MCF 10A (cell line): ENCODE measurements at regions of chr5 and their contacts with region 1.

Region 1: DNA sequence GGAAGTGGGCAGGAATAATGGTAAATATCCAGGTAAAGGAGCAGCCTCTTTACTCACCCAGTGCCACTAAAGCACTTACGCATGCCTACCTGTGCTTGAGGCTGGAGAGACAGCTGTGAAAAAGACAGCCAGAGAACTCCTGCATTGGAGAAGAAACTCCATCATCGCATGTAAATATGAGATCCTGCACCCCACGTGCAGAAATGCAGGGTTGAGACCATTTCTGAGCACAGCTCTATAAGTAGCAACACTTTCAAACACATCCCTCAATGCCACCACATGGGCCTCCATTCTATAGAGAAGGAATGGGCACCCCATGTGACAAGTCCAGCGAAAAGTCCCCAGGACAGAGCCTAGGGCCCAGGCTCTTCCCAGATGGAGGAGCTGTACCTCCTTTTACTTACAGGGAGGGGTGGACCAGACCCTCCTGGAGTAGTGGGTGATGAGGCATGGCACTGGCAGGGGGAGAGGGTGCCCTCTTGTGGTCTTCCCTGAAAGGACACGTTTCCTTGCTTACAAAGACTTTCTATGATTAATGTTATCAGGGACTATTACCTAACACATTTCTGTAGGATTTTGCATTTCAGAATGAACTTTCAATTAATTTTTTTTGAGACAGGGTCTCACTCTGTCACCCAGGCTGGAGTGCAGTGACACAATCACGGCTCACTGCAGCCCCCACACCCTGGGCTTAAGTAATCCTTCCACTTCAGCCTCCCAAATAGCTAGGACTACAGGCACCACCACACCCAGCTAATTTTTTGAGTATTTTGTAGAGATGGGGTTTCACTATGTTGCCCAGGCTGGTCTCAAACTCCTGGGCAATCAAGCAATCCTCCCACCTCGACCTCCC is 55.3 kb upstream of the IL17B start:
- DNase-seq: peak; percentile 75
- H3K4me3 Mint-ChIP-seq: no peak overlapping the region
- H3K27ac Mint-ChIP-seq: no peak overlapping the region
- H3K4me1 Mint-ChIP-seq: peaks cover 13% of the 10 kb centered on the region
- H3K27me3 Mint-ChIP-seq: no peaks in the 10 kb centered on the region
- CTCF ChIP-seq: peak; percentile 98

Region 2: DNA sequence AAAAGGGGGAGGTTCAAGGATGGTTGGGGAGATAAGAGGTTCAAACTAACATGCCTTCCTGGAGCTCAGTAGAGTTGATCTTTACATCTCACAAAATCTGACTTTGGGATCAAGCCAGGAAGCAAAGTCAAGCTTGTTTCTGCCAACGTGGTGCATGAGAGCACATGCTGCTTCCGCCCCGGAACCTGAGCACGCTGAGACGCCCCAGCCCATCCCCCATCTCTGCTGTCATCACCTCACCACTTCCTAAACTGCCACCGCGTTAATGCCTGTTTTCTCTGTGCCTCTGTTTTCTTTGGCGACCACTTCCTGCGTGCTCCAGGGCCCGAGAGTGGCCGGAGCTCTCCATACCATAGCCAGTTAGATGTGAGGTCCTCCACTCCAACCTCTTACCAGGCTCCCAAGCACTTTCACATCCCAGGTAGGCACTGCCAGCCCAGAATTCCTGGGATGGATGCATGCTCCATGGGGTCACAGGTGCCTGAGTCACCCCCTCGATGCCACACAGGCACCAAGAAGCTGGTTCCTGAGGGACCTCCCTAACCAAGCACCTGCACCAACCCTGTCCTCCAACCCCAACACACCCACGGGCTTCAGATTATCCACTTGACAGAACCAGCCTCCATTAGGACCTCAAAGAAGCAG is 193.9 kb before region 1 on chr5:
- CTCF ChIA-PET with region 1: no interaction called
- POLR2A ChIA-PET with region 1: no interaction called
- intact Hi-C with region 1: no loop called
- DNase-seq: no peak
- H3K4me3 Mint-ChIP-seq: no peak overlapping the region
- H3K27ac Mint-ChIP-seq: no peak overlapping the region
- H3K4me1 Mint-ChIP-seq: peaks cover 7% of the 10 kb centered on the region
- H3K27me3 Mint-ChIP-seq: no peaks in the 10 kb centered on the region
- CTCF ChIP-seq: no peak

Region 3: GRCh38 chr5:149381987-149382340 is 52.4 kb before region 1 on chr5:
- CTCF ChIA-PET with region 1: interaction called, 662 read pairs
- POLR2A ChIA-PET with region 1: interaction called, 5 read pairs
- intact Hi-C with region 1: loop called (anchors 1 kb)
- DNase-seq: peak; percentile 78
- H3K4me3 Mint-ChIP-seq: no peak overlapping the region
- H3K27ac Mint-ChIP-seq: no peak overlapping the region
- H3K4me1 Mint-ChIP-seq: no peaks in the 10 kb centered on the region
- H3K27me3 Mint-ChIP-seq: no peaks in the 10 kb centered on the region
- CTCF ChIP-seq: peak; percentile 97

Region 4: DNA sequence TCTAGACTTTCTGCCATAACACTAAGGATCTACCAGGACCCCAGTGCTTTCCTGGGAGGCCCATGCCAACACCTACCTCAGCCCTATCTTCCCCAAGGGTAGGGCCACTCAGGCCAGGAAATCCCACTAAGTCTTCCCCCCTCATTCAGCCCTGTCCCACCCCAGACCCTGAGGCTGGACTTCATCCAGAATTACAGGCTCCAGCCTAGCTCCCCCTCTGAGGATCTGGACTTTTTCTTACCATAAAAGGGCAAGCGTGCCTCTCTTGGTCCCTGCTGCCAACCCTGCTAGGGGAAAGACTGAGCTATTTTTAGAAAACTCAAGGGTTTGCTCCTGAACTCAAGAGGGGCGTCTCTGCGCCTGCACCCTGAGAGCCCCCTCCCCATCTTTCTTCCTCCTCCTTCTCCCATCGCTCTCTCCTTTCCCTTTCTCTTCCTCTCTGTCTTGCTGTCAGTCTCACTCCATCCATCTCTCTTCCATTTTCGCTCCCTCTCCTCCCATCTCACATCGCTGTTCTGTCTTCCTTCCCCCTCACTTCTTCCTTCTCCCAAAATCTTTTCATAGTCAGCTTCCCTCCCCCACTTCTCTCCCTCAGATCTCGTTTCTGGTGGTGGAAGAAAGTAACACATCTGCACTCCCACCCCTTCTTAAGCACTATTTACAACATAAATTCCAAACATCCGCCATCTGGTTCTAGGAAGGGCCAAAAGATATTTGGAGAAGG is 17.2 kb before region 1 on chr5:
- CTCF ChIA-PET with region 1: interaction called, 81 read pairs
- POLR2A ChIA-PET with region 1: interaction called, 3 read pairs
- intact Hi-C with region 1: no loop called
- DNase-seq: no peak
- H3K4me3 Mint-ChIP-seq: no peak overlapping the region
- H3K27ac Mint-ChIP-seq: no peak overlapping the region
- H3K4me1 Mint-ChIP-seq: no peaks in the 10 kb centered on the region
- H3K27me3 Mint-ChIP-seq: peaks cover 18% of the 10 kb centered on the region
- CTCF ChIP-seq: no peak

Region 5: DNA sequence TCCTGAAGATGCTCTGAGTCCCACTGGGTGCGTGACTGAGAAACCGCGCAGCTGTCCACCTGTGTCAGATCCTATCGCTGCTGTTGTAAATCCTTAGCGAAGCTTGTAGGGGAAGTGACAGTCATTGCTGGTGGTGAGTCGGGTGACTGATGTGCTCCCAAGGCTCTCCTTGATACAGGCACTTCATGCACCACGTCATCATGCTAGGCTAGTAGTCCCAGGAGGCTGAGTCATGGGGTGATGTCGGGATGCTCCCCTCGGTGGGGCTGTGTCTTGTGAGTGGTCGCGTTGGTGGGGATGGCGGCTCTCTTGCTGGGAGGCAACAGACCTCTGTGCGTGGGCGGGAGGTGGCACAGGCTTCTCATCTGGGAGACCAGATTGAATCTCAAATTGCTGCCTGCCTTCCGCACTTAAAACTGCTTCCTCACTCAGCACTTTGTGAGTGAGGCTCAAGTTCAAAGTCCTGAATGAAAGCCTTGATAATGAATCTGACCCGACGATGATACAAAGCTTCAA is 32.1 kb after region 1 on chr5:
- CTCF ChIA-PET with region 1: interaction called, 78 read pairs
- POLR2A ChIA-PET with region 1: interaction called, 1,058 read pairs
- intact Hi-C with region 1: no loop called
- DNase-seq: peak; percentile 36
- H3K4me3 Mint-ChIP-seq: no peak overlapping the region
- H3K27ac Mint-ChIP-seq: no peak overlapping the region
- H3K4me1 Mint-ChIP-seq: peaks cover 13% of the 10 kb centered on the region
- H3K27me3 Mint-ChIP-seq: no peaks in the 10 kb centered on the region
- CTCF ChIP-seq: no peak

Region 6: GRCh38 chr5:149581192-149581861 is 146.9 kb after region 1 on chr5 and contains the start of gene ARHGEF37:
- CTCF ChIA-PET with region 1: interaction called, 10 read pairs
- POLR2A ChIA-PET with region 1: interaction called, 21 read pairs
- intact Hi-C with region 1: no loop called
- DNase-seq: peak; percentile 83
- H3K4me3 Mint-ChIP-seq: peak within 1 kb of the TSS; percentile 75
- H3K27ac Mint-ChIP-seq: peak within 1 kb of the TSS; percentile 76
- H3K4me1 Mint-ChIP-seq: peaks cover 26% of the 10 kb centered on the region
- H3K27me3 Mint-ChIP-seq: no peaks in the 10 kb centered on the region
- CTCF ChIP-seq: no peak
- total RNA-seq, gene ARHGEF37: 3.9 and 5.1 TPM in 2 replicates

Region 7: DNA sequence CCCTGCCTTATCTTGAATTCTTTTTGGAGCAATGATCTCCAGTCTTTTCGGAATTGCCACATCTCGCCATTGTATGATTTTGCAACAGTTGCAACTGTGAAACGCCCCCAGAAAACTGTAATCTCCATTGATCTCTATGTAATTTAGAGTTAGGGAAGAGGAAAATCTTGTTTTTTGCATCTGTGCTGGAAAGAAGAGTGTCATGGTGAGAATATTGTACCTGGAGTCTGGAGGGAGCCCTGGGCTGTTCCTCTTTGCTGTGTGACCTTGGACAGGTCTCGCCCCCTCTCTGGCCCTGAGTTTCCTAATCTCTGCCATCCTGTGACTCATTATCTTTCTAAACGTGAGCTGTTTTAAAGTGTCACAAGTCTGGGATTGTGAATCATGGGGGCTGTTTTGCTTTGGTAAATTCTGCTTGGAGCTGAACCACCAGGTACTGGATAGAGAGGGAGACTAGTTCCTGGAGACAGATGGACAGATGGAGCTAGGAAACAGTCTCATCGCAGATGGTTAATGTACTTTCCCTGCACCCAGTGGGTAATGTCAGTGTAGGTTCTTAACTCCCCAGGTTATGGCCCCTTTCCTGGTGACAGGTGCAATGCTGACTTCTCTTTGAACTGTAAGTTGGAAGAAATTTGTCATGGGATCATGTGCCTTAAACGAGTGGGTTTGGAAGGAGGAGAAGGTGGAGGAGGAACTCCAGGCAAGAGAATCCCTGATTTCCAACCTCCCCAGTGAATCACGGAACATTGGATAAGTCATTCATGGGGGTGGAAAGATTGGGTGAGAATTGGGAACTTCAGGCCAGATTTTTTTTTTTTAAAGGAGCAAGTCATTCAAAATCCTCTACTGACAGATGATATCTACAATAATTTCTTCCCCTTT is 315.3 kb after region 1 on chr5:
- CTCF ChIA-PET with region 1: no interaction called
- POLR2A ChIA-PET with region 1: no interaction called
- intact Hi-C with region 1: no loop called
- DNase-seq: peak; percentile 90
- H3K4me3 Mint-ChIP-seq: peak overlapping the region; percentile 45
- H3K27ac Mint-ChIP-seq: peak overlapping the region; percentile 63
- H3K4me1 Mint-ChIP-seq: peaks cover 64% of the 10 kb centered on the region
- H3K27me3 Mint-ChIP-seq: no peaks in the 10 kb centered on the region
- CTCF ChIP-seq: no peak

Region 8: GRCh38 chr5:149951135-149951749 is 516.9 kb after region 1 on chr5:
- CTCF ChIA-PET with region 1: no interaction called
- POLR2A ChIA-PET with region 1: no interaction called
- intact Hi-C with region 1: no loop called
- DNase-seq: no peak
- H3K4me3 Mint-ChIP-seq: no peak overlapping the region
- H3K27ac Mint-ChIP-seq: peak overlapping the region; percentile 21
- H3K4me1 Mint-ChIP-seq: peaks cover 30% of the 10 kb centered on the region
- H3K27me3 Mint-ChIP-seq: no peaks in the 10 kb centered on the region
- CTCF ChIP-seq: no peak